ENCODE measurements at regions of chr14 and their contacts with region 1.

Region 1: GRCh38 chr14:44961604-44962333 is at the starts of genes KLHL28 and TOGARAM1:
- DNase-seq: peak; percentile 97 to 100
- ATAC-seq: peak; percentile 91 to 93
- H3K4me3 ChIP-seq: peak within 1 kb of the TSS; percentile 76
- H3K27ac ChIP-seq: peak within 1 kb of the TSS; percentile 80 to 89
- H3K4me1 ChIP-seq: peaks cover 31% of the 10 kb centered on the region
- CTCF ChIP-seq: no peak
- EP300 ChIP-seq: no peak
- POLR2A ChIP-seq: peak; percentile 87
- RAD21 ChIP-seq: no peak
- polyA plus RNA-seq, gene KLHL28: 8.3 and 10.0 TPM in 2 replicates
- polyA plus RNA-seq, gene TOGARAM1: 17.6 and 18.9 TPM in 2 replicates

Region 2: DNA sequence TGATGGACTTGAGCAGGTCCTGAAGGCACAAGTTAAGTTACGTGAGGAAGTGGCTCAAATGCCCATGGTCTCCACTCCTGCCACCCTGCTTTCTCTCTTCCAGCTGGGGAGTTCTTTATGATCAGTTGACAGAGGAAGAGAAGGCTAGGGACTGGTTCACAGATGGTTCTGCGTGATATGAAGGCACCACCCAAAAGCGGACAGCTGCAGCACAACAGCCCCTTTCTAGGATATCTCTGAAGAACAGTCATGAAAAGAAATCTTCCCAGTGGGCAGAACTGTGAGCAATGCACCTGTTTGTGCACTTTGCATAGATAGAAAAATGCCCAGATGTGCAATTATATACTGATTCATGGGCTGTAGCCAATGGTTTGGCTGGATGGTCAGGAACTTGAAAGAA is 292.3 kb before region 1 on chr14:
- CTCF ChIA-PET with region 1: no interaction called
- POLR2A ChIA-PET with region 1: no interaction called
- DNase-seq: no peak
- ATAC-seq: no peak
- H3K4me3 ChIP-seq: no peak overlapping the region
- H3K27ac ChIP-seq: no peak overlapping the region
- H3K4me1 ChIP-seq: no peaks in the 10 kb centered on the region
- CTCF ChIP-seq: no peak
- EP300 ChIP-seq: no peak
- POLR2A ChIP-seq: no peak
- RAD21 ChIP-seq: no peak

Region 3: DNA sequence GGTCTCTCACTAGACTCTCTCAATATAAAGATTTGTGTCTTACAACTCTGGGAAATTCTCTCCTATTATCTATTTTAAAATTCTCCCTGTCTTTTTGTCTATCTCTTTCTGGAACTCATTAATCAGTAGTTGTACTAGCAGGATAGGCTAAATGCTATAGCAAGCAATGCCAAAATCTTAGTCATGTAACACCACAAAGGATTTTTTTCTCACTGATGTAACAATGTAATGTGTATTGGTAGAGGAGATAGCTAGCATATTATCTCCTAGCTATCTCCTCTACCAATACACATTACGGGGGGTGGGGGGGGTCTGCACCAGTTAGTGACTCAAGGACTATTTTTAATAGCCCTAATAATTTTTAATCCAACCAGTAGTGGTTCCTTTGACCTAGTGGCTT is 225.4 kb before region 1 on chr14:
- CTCF ChIA-PET with region 1: no interaction called
- POLR2A ChIA-PET with region 1: no interaction called
- DNase-seq: no peak
- ATAC-seq: no peak
- H3K4me3 ChIP-seq: no peak overlapping the region
- H3K27ac ChIP-seq: no peak overlapping the region
- H3K4me1 ChIP-seq: no peaks in the 10 kb centered on the region
- CTCF ChIP-seq: no peak
- EP300 ChIP-seq: no peak
- POLR2A ChIP-seq: no peak
- RAD21 ChIP-seq: no peak

Region 4: DNA sequence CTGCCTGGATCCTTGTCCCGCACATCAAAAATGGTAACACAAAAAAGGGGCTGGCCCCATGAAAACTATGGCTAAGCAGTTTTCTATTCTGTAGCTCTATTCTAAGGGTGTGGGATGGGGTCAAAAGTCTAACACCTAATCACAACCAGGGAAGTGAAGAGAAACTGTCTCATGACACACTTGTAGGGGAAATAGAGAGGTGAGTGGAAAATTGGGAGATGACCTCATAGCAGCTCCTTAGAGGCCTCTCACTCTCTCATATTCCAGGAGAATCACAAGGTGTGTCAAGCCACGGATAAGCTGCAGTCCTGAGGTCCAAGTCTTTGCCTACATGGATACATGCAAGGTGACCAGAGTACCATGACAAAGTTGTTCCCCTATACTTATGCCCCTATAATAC is 10.7 kb before region 1 on chr14:
- CTCF ChIA-PET with region 1: no interaction called
- POLR2A ChIA-PET with region 1: interaction called, 12 read pairs
- DNase-seq: no peak
- ATAC-seq: no peak
- H3K4me3 ChIP-seq: no peak overlapping the region
- H3K27ac ChIP-seq: no peak overlapping the region
- H3K4me1 ChIP-seq: no peaks in the 10 kb centered on the region
- CTCF ChIP-seq: no peak
- EP300 ChIP-seq: no peak
- POLR2A ChIP-seq: no peak
- RAD21 ChIP-seq: no peak

Region 5: GRCh38 chr14:44992113-44992512 is 30.3 kb after region 1 on chr14:
- CTCF ChIA-PET with region 1: no interaction called
- POLR2A ChIA-PET with region 1: interaction called, 11 read pairs
- DNase-seq: no peak
- ATAC-seq: no peak
- H3K4me3 ChIP-seq: no peak overlapping the region
- H3K27ac ChIP-seq: no peak overlapping the region
- H3K4me1 ChIP-seq: peaks cover 53% of the 10 kb centered on the region
- CTCF ChIP-seq: no peak
- EP300 ChIP-seq: no peak
- POLR2A ChIP-seq: no peak
- RAD21 ChIP-seq: no peak

Region 6: GRCh38 chr14:45134051-45134958 is 172.5 kb after region 1 on chr14 and contains the start of gene FKBP3:
- CTCF ChIA-PET with region 1: no interaction called
- POLR2A ChIA-PET with region 1: interaction called, 12 read pairs
- DNase-seq: peak; percentile 97 to 99
- ATAC-seq: peak; percentile 93 to 94
- H3K4me3 ChIP-seq: peak within 1 kb of the TSS; percentile 78
- H3K27ac ChIP-seq: peak within 1 kb of the TSS; percentile 91 to 96
- H3K4me1 ChIP-seq: peaks cover 20% of the 10 kb centered on the region
- CTCF ChIP-seq: peak; percentile 37
- EP300 ChIP-seq: no peak
- POLR2A ChIP-seq: peak; percentile 87
- RAD21 ChIP-seq: peak; percentile 19 to 28; a peak in 1 of 5 replicates
- polyA plus RNA-seq, gene FKBP3: 106 and 202 TPM in 2 replicates

Region 7: DNA sequence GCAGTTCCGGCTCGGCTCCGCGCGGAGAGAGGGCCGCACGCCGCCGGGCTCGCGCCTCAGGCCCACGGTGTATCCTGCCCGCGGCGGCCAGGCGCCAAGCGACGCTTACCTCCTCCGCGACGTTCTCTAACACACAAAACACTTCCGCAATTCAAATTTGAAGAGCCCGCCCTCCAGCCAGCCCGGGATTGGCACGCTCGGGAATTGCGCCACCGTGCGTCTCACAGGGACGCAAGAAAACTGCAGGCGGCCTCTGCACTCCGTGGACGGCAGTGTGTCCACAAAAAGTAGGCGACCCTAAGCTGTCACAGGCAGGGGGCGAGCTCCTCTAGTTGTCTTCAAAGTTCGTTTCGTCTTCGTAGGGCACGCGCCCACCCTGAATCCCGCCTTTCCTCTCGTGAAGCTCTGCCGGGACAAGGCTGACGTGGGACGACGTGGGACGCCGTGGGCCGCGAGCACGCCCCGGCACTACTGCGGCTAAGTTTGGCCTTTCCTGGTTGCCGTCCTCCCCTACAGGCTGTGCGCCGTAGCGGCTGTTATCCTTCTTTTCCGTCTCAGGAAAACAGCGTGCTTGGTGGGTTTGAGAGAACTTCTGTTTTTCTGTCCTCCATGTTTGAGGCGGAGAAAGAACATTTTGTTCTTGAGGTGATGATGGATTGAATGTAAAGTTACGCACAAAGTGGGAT is 291.4 kb after region 1 on chr14 and contains the start of gene MIS18BP1:
- CTCF ChIA-PET with region 1: interaction called, 5 read pairs
- POLR2A ChIA-PET with region 1: interaction called, 11 read pairs
- DNase-seq: peak; percentile 86 to 98
- ATAC-seq: peak; percentile 89 to 95
- H3K4me3 ChIP-seq: peak within 1 kb of the TSS; percentile 72
- H3K27ac ChIP-seq: peak within 1 kb of the TSS; percentile 82 to 92
- H3K4me1 ChIP-seq: peaks cover 22% of the 10 kb centered on the region; the same call in 2 of the 3 replicates
- CTCF ChIP-seq: peak; percentile 66
- EP300 ChIP-seq: 0 out of 5 replicates have a peak, but pooled peaks of 1 of the 2 experiments have one; percentile 14
- POLR2A ChIP-seq: peak; percentile 51
- RAD21 ChIP-seq: no peak; a peak in 1 of 5 replicates
- polyA plus RNA-seq, gene MIS18BP1: 28.0 and 38.0 TPM in 2 replicates

Measured in A549 (cell line).